Gastrocnemius medialis (tissue), 4 donors: ENCODE measurements at regions of chr2 and their contacts with region 1.

Region 1: DNA sequence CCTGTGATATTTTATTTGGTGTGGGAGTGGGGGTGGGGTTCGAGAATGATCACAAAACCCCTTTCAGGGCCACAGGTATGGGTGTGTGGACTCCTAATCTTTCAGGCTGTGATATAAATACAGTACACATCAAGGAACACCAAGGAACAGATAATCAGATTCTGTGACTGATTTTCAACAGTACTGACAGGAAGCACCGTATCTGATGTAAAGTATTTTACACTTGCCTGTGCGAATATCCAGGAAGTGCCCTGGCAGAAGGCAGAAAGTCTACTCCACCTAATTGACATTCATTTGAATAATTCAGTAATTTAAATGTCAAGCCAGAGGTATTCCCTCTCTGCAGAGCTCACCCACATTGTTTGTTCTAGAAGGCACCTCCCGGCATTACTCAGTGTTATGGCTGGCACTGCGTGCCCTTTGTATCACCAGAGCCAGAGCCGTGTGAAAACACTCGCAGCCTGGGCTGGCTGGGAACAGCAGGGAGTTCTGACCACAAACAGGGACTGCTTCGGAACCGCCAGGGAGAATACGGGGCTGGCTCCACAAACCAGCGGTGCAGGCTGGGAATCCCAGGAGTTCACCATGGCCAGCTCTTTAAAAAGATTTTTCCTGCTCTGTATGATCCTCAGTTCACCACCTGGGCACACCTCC is 91.8 kb downstream of the ACVR1 start:
- DNase-seq: peak; percentile 32 to 45
- ATAC-seq: peak; percentile 31 to 42
- H3K4me3 ChIP-seq: peak overlapping the region; percentile 3 to 22 (median 10)
- H3K27ac ChIP-seq: peak overlapping the region; percentile 69 to 94 (median 79)
- H3K4me1 ChIP-seq: peaks cover 90 to 91% of the 10 kb centered on the region in 2 donors
- H3K27me3 ChIP-seq: no peaks in the 10 kb centered on the region
- CTCF ChIP-seq: no peak
- POLR2A ChIP-seq: no peak

Region 2: GRCh38 chr2:157830696-157831570 is 46.6 kb after region 1 on chr2:
- in situ Hi-C with region 1: no loop called
- intact Hi-C with region 1: no loop called
- DNase-seq: peak in 1 of 2 donors; percentile 48
- ATAC-seq: peak; percentile 93 to 94
- H3K4me3 ChIP-seq: no peak overlapping the region
- H3K27ac ChIP-seq: peak overlapping the region; percentile 69 to 84 (median 78)
- H3K4me1 ChIP-seq: peaks cover 31 to 59% of the 10 kb centered on the region in 2 donors
- H3K27me3 ChIP-seq: no peaks in the 10 kb centered on the region
- CTCF ChIP-seq: no peak
- POLR2A ChIP-seq: no peak

Region 3: GRCh38 chr2:157876066-157876787 is 91.9 kb after region 1 on chr2 and contains the start of gene ACVR1:
- in situ Hi-C with region 1: loop called (anchors 5 to 10 kb)
- intact Hi-C with region 1: loop called (anchors 1 kb)
- DNase-seq: peak; percentile 96 to 97
- ATAC-seq: peak; percentile 93 to 94
- H3K4me3 ChIP-seq: peak within 1 kb of the TSS; percentile 81 to 92 (median 84)
- H3K27ac ChIP-seq: peak within 1 kb of the TSS; percentile 93 to 97 (median 96)
- H3K4me1 ChIP-seq: peaks cover 41 to 45% of the 10 kb centered on the region in 2 donors
- H3K27me3 ChIP-seq: no peaks in the 10 kb centered on the region
- CTCF ChIP-seq: peak; percentile 43 to 83 (median 66)
- POLR2A ChIP-seq: peak; percentile 76 to 85
- total RNA-seq, gene ACVR1: 10.8 to 18.4 (median 12.2) TPM